Naive thymus-derived CD4-positive, alpha-beta T cell (primary cell): ENCODE measurements at regions of chr12 and their contacts with region 1.

Region 1: GRCh38 chr12:50043854-50044253 is 13.5 kb upstream of the ASIC1 start:
- DNase-seq: no peak
- ATAC-seq: no peak
- H3K4me3 ChIP-seq: no peak overlapping the region
- H3K4me3 Mint-ChIP-seq: no peak overlapping the region
- H3K27ac ChIP-seq: no peak overlapping the region
- H3K27ac Mint-ChIP-seq: no peak overlapping the region
- H3K4me1 ChIP-seq: no peaks in the 10 kb centered on the region
- H3K4me1 Mint-ChIP-seq: peaks cover 0 to 21% (median 0%) of the 10 kb centered on the region in 7 donors
- H3K27me3 ChIP-seq: no peaks in the 10 kb centered on the region
- H3K27me3 Mint-ChIP-seq: peaks cover under 1 to 12% (median 1%) of the 10 kb centered on the region in 5 donors

Region 2: GRCh38 chr12:50055831-50056638 is 12.2 kb after region 1 on chr12:
- CTCF ChIA-PET with region 1: interaction called, 19 read pairs
- POLR2A ChIA-PET with region 1: interaction called, 3 read pairs
- intact Hi-C with region 1: loop called (anchors 1 kb)
- DNase-seq: peak; percentile 41 to 64 (median 56)
- ATAC-seq: peak; percentile 79
- H3K4me3 ChIP-seq: peak overlapping the region; percentile 42
- H3K4me3 Mint-ChIP-seq: peak overlapping the region; percentile 66 to 96 (median 92)
- H3K27ac ChIP-seq: no peak overlapping the region
- H3K27ac Mint-ChIP-seq: peak overlapping the region in 2 of 9 donors; percentile 46 to 57
- H3K4me1 ChIP-seq: peaks cover 7 to 31% of the 10 kb centered on the region in 2 donors
- H3K4me1 Mint-ChIP-seq: peaks cover 17 to 48% (median 41%) of the 10 kb centered on the region in 7 donors
- H3K27me3 ChIP-seq: peaks cover 0 to 9% of the 10 kb centered on the region in 2 donors
- H3K27me3 Mint-ChIP-seq: peaks cover 38 to 56% (median 48%) of the 10 kb centered on the region in 5 donors